Breast epithelium (tissue), 4 donors: ENCODE measurements at regions of chr17 and their contacts with region 1.

Region 1: DNA sequence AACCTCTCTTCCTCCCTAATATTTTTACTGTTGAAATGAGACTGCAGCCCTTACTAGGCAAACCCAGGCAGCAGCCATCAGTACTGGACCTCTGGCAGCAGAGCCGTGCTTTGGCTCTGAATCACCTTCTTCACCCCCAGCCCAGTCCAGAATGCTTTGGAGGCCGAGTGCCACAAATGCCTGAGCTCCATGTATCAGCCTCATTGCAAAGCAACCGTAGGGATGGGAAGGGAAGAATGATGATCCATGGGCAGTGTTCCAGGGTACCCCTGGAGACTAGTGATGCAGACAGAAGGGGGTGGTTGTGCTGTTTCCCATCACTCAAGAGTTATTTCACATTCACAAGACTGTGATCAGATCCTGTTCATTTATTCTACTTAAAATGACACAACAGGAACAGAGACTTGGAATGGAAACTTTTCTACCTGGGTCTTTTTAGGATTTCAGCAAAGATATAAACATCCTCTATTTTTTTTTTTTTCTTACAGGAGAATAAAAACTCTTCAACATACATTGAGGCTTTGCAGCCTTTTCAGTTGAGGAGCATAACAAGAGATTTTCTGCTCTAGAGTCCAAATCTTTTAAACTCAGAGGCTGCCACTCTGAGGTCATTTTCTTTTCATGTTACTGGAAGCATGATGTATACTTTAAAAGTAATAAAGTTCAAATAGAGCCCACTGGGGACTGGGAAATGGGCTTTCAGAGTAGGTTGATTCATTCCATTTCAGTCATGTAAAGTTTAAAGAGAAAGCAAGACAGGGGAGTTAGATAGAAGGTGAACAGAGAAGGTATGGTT is 138.3 kb downstream of the KCNJ2 start:
- DNase-seq: no peak
- H3K4me3 ChIP-seq: no peak overlapping the region
- H3K27ac ChIP-seq: no peak overlapping the region
- H3K4me1 ChIP-seq: no peaks in the 10 kb centered on the region
- H3K27me3 ChIP-seq: no peaks in the 10 kb centered on the region
- CTCF ChIP-seq: no peak
- POLR2A ChIP-seq: no peak

Region 2: GRCh38 chr17:70365091-70365583 is 57.5 kb after region 1 on chr17:
- intact Hi-C with region 1: loop called (anchors 10 kb)
- DNase-seq: no peak
- H3K4me3 ChIP-seq: no peak overlapping the region
- H3K27ac ChIP-seq: no peak overlapping the region
- H3K4me1 ChIP-seq: no peaks in the 10 kb centered on the region
- H3K27me3 ChIP-seq: no peaks in the 10 kb centered on the region
- CTCF ChIP-seq: no peak
- POLR2A ChIP-seq: no peak